Naive thymus-derived CD4-positive, alpha-beta T cell (primary cell): ENCODE measurements at regions of chr7 and their contacts with region 1.

Region 1: DNA sequence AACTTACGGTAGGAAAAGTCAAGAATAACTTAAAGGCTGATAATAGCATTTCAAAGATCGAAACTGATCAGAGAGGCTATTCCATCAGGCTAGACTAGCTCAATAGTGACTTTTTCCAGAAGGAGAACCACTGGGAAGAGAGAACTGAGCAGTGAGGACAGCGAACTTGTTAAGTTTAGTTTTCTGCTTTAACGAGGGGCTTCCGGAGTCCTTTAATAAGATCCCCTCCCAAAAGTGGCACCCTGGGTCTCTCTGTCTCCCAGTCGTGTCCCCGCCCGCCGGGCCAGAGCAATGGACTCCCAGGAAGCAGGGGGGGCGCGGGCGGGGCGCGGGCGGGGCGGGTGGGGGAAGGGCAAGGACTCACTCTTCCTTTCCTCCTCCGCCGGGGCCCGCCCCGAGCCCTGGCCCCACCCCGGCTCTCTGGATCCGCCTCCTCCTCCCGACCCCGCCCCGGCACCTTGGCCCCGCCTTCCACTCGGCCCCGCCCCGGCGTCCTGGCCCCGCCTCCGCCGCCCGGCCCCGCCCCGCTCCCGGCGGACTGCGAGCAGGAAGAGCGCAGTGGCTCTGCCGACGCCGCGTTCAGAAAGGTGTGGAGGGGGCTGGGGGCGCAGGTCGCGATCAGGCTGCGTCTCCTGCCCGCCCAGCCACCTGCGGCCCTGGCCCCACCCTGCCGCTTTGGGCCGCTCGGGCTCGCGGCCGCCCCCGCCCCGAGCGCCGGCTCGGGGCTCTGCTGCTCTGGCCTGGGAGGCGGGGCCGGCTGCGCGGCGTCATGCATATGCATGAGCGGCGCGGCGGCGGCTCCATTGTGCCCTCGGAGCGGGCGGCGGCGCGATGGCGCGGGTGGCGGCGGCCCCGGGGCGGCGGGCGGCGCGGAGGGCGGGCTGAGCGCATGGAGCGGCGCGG is at the start of gene ZMIZ2:
- DNase-seq: peak; percentile 87 to 99 (median 93)
- ATAC-seq: peak; percentile 94
- H3K4me3 ChIP-seq: peak within 1 kb of the TSS; percentile 64
- H3K4me3 Mint-ChIP-seq: peak within 1 kb of the TSS; percentile 77 to 92 (median 88)
- H3K27ac ChIP-seq: peak within 1 kb of the TSS; percentile 98
- H3K27ac Mint-ChIP-seq: peak within 1 kb of the TSS; percentile 81 to 98 (median 92)
- H3K4me1 ChIP-seq: peaks cover 21 to 22% of the 10 kb centered on the region in 2 donors
- H3K4me1 Mint-ChIP-seq: peaks cover 22 to 63% (median 45%) of the 10 kb centered on the region in 7 donors
- H3K27me3 ChIP-seq: no peaks in the 10 kb centered on the region
- H3K27me3 Mint-ChIP-seq: no peaks in the 10 kb centered on the region
- total RNA-seq, gene ZMIZ2: 108 to 187 (median 144) TPM

Region 2: DNA sequence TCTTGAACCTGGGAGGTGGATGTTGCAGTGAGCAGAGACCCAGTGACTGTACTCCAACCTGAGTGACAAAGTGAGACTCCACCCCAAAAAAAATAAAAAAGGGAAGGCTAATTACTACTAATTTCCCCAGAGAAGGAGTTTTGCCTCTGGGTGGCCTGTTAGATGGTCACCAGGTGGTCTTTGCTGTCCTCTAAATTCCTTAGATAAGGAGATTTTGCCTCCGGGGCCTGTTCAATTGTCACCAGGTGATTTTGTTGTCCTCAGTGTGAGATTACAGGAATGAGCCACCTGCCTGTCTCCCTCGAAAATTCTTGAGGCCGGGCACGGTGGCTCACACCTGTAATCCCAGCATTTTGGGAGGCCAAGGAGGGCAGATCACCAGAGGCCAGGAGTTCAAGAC is 24.0 kb before region 1 on chr7:
- CTCF ChIA-PET with region 1: no interaction called
- POLR2A ChIA-PET with region 1: no interaction called
- intact Hi-C with region 1: no loop called
- DNase-seq: no peak
- ATAC-seq: no peak
- H3K4me3 ChIP-seq: no peak overlapping the region
- H3K4me3 Mint-ChIP-seq: no peak overlapping the region
- H3K27ac ChIP-seq: no peak overlapping the region
- H3K27ac Mint-ChIP-seq: no peak overlapping the region
- H3K4me1 ChIP-seq: no peaks in the 10 kb centered on the region
- H3K4me1 Mint-ChIP-seq: peaks cover 0 to 5% (median 0%) of the 10 kb centered on the region in 7 donors
- H3K27me3 ChIP-seq: no peaks in the 10 kb centered on the region
- H3K27me3 Mint-ChIP-seq: peaks cover 0 to 4% (median 0%) of the 10 kb centered on the region in 5 donors

Region 3: DNA sequence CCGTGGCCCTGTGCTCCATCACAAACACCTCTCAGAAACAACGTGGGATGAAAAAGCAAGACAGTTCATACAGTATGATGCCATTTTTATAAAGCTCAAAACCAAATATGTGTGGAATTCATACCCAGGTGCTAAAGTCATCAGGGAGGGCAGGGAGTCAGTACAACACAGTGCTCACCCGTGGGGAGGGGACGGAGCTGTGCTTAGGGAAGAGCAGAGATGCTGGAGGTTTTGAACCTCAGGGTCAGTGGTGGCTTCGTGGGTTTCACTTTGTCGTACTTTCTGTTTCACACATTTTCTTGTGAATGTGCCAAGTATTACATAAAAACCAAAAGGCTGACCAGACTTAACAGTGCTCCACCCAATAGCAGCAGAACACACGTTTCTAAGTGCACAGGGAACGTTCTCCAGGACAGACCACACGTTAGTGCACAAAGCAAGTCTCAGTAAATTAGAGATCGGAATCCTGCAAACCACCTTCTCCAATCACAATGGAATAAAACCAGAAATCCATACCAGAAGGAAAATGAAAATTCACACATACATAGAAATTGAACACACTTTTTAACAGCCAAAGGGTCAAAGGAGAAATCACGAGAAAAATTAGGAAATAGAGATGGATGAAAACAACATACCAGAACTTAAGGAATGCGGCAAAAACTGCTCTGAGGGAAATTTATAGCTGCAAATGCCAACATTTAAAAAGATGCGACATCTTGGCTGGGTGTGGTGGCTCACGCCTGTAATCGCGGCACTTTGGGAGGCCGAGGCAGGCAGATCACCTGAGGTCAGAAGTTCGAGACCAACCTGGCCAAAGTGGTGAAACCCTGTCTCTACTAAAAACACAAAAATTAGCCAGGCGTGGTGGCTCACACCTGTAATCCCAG is 21.7 kb after region 1 on chr7:
- CTCF ChIA-PET with region 1: no interaction called
- POLR2A ChIA-PET with region 1: interaction called, 7 read pairs
- intact Hi-C with region 1: loop called in 1 of 2 experiments (anchors 2 kb)
- DNase-seq: no peak
- ATAC-seq: peak; percentile 63
- H3K4me3 ChIP-seq: no peak overlapping the region
- H3K4me3 Mint-ChIP-seq: peak overlapping the region in 6 of 10 donors; percentile 10 to 50 (median 13)
- H3K27ac ChIP-seq: peak overlapping the region; percentile 61
- H3K27ac Mint-ChIP-seq: peak overlapping the region; percentile 61 to 91 (median 83)
- H3K4me1 ChIP-seq: peaks cover 12 to 33% of the 10 kb centered on the region in 2 donors
- H3K4me1 Mint-ChIP-seq: peaks cover 36 to 49% (median 39%) of the 10 kb centered on the region in 7 donors
- H3K27me3 ChIP-seq: no peaks in the 10 kb centered on the region
- H3K27me3 Mint-ChIP-seq: peaks cover 0 to 4% (median 0%) of the 10 kb centered on the region in 5 donors

Region 4: DNA sequence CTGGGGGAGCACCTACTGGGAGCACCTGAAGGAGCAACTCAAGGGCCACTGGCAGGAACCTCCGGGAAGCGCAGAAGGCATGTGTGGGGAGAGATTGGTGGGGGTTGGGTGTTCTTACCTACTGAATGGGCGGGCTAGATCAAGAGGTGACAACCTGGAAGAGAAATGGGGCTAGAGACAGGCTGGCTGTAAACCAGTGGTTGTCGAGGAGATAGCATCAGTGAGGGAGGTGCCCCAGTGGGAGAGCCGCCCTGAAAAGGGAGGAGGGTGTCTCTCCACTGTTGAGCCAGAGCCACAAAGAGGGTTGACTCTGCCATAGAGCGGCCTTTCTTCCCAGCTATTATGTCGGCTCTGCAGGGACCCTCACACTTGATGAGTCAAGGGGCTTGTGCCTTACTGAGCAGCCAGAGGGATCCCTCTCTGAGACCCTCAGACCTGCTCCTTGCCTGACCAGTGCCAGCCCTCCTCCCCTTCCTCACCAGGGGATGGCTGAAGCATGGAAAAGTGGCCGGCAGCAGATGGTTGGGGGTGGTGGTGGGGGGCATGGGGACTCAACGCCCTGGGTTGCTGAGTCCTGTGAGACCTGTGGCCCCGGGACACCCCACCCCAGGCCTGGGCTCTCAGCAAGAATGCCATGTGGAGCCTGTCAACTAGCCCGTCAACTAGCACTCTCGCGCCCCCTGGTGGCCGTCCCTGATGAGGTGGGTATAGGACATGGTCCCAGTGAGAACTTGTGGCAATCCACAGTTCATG is 173.5 kb after region 1 on chr7:
- CTCF ChIA-PET with region 1: no interaction called
- POLR2A ChIA-PET with region 1: no interaction called
- intact Hi-C with region 1: loop called in 1 of 2 experiments (anchors 5 kb)
- DNase-seq: peak; percentile 76 to 98 (median 86)
- ATAC-seq: peak; percentile 99
- H3K4me3 ChIP-seq: no peak overlapping the region
- H3K4me3 Mint-ChIP-seq: no peak overlapping the region
- H3K27ac ChIP-seq: no peak overlapping the region
- H3K27ac Mint-ChIP-seq: peak overlapping the region in 5 of 9 donors; percentile 6 to 78 (median 34)
- H3K4me1 ChIP-seq: peaks cover 0 to 9% of the 10 kb centered on the region in 2 donors
- H3K4me1 Mint-ChIP-seq: peaks cover 0 to 21% (median 0%) of the 10 kb centered on the region in 7 donors
- H3K27me3 ChIP-seq: no peaks in the 10 kb centered on the region
- H3K27me3 Mint-ChIP-seq: peaks cover 0 to 6% (median 0%) of the 10 kb centered on the region in 5 donors

Region 5: GRCh38 chr7:44955733-44956132 is 207.4 kb after region 1 on chr7:
- CTCF ChIA-PET with region 1: no interaction called
- POLR2A ChIA-PET with region 1: no interaction called
- intact Hi-C with region 1: no loop called
- DNase-seq: no peak
- ATAC-seq: no peak
- H3K4me3 ChIP-seq: no peak overlapping the region
- H3K4me3 Mint-ChIP-seq: no peak overlapping the region
- H3K27ac ChIP-seq: no peak overlapping the region
- H3K27ac Mint-ChIP-seq: peak overlapping the region in 3 of 9 donors; percentile 28 to 51 (median 34)
- H3K4me1 ChIP-seq: peaks cover 0 to 18% of the 10 kb centered on the region in 2 donors
- H3K4me1 Mint-ChIP-seq: peaks cover 6 to 23% (median 12%) of the 10 kb centered on the region in 7 donors
- H3K27me3 ChIP-seq: no peaks in the 10 kb centered on the region
- H3K27me3 Mint-ChIP-seq: peaks cover 0 to 20% (median 0%) of the 10 kb centered on the region in 5 donors